Activated CD4-positive, alpha-beta T cell treated with anti-CD3 and anti-CD28 coated beads, Interleukin-2, amount 10 ng/mL, durations not matched to agents 24 days and 14 days (primary cell): ENCODE measurements at regions of chr11 and their contacts with region 1.

Region 1: DNA sequence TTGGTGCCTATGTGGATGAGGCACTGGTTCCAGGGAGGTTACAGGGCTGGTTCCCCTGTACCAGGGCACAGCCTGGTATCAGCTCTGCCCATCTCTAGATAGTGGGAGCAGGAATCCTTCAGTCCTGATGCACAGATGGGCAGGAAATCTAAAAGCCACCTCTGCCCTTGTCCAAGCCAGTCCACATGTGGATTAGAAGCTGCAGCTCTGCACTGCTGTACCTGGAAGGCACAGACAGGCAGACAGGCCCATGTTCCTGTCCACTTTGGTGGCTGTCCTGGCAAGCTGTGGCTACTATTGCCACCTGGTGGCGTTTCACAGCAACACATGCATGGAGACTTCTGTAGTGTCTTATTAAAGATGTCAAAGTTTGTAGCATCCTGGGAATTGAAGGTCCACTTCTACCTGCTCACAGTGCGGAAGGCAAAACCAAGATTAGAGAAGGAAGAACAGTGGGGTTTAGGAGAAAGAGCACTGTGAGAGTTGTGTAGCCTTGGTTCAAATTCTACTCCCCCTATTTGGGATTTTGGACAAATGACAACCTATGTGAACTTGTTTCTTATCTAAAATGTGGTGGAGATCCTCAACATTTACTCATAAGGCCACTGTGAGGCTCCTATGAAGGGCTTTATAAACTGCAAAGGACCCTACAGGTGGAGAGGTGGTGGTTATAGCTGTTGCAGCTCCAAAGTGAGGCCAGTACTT is 30.1 kb downstream of the NAV2 start:
- DNase-seq: peak; percentile 88
- H3K4me3 Mint-ChIP-seq: no peak overlapping the region
- H3K27ac Mint-ChIP-seq: no peak overlapping the region
- H3K4me1 Mint-ChIP-seq: no peaks in the 10 kb centered on the region
- H3K27me3 Mint-ChIP-seq: peaks cover 4% of the 10 kb centered on the region

Region 2: GRCh38 chr11:19281041-19281440 is 461.7 kb before region 1 on chr11:
- intact Hi-C with region 1: no loop called
- DNase-seq: no peak
- H3K4me3 Mint-ChIP-seq: no peak overlapping the region
- H3K27ac Mint-ChIP-seq: no peak overlapping the region
- H3K4me1 Mint-ChIP-seq: peaks cover 8% of the 10 kb centered on the region
- H3K27me3 Mint-ChIP-seq: peaks cover 2% of the 10 kb centered on the region

Region 3: GRCh38 chr11:19561011-19561410 is 181.7 kb before region 1 on chr11:
- intact Hi-C with region 1: loop called (anchors 1 kb)
- DNase-seq: no peak
- H3K4me3 Mint-ChIP-seq: no peak overlapping the region
- H3K27ac Mint-ChIP-seq: no peak overlapping the region
- H3K4me1 Mint-ChIP-seq: no peaks in the 10 kb centered on the region
- H3K27me3 Mint-ChIP-seq: peaks cover 8% of the 10 kb centered on the region

Region 4: GRCh38 chr11:19723572-19724342 is 19.0 kb before region 1 on chr11:
- intact Hi-C with region 1: no loop called
- DNase-seq: peak; percentile 79
- H3K4me3 Mint-ChIP-seq: peak overlapping the region; percentile 56
- H3K27ac Mint-ChIP-seq: peak overlapping the region; percentile 42
- H3K4me1 Mint-ChIP-seq: peaks cover 18% of the 10 kb centered on the region
- H3K27me3 Mint-ChIP-seq: peaks cover 16% of the 10 kb centered on the region

Region 5: GRCh38 chr11:19903620-19904069 is 160.9 kb after region 1 on chr11:
- intact Hi-C with region 1: loop called (anchors 5 kb)
- DNase-seq: peak; percentile 79
- H3K4me3 Mint-ChIP-seq: no peak overlapping the region
- H3K27ac Mint-ChIP-seq: no peak overlapping the region
- H3K4me1 Mint-ChIP-seq: no peaks in the 10 kb centered on the region
- H3K27me3 Mint-ChIP-seq: peaks cover 2% of the 10 kb centered on the region